ENCODE measurements at regions of chr5 and their contacts with region 1.

Region 1: DNA sequence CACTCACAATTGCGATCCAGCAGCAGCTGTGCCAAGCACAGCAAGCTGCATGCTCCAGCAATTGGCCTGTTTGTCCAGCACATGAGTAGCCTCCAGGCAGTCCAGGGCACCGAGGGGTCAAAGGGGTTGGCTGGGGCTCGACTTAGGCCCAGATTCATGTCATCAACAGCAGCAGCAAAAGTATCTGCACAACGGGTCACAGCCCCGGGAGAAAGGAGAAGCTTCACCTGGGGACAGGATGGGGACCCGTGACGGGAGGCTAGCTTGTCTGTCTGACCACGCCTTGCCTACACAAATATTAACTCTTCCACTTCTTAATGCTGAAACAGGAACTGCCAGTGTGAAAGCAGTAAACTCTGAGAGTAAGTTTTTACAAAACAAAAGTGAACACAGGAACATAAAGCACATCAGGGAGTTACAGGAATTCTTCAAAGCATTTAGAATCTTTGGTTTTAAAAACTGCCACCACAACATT is 191.2 kb downstream of the PIK3R1 start:
- DNase-seq: no peak
- H3K4me3 Mint-ChIP-seq: no peak overlapping the region
- H3K27ac Mint-ChIP-seq: no peak overlapping the region
- H3K4me1 Mint-ChIP-seq: peaks cover 24% of the 10 kb centered on the region
- H3K27me3 Mint-ChIP-seq: no peaks in the 10 kb centered on the region

Region 2: DNA sequence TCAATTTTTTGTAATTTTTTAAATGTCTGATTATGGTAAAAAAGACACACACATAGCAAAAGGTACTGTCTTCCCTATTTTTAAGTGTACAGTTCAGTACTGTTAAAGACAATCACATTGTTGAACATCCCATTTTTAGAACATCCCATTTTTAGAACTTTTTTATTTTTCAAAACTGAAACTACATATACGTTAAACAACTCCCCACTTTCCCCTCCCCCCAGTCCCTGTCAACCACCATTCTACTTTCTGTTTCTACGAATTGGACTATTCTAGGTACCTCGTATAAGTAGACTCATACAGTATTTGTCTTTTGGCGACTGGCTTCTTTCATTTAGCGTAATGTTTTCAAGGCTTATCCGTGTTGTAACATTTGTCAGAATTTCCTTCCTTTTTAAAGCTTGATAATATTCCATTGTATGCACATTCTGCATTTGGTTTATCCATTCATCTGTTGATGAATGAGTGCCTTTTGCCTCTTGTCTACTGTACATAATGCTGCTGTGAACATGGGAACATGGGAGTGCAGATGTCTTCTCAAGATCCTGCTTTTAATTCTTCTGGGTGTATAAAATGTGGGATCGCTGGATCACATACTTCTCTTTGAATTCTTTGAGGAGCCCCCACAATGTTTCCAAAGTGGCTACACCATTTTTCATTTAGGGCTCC is 37.2 kb before region 1 on chr5:
- CTCF ChIA-PET with region 1: no interaction called
- intact Hi-C with region 1: loop called (anchors 1 kb)
- DNase-seq: peak; percentile 73
- H3K4me3 Mint-ChIP-seq: no peak overlapping the region
- H3K27ac Mint-ChIP-seq: peak overlapping the region; percentile 19
- H3K4me1 Mint-ChIP-seq: peaks cover 36% of the 10 kb centered on the region
- H3K27me3 Mint-ChIP-seq: no peaks in the 10 kb centered on the region

Region 3: GRCh38 chr5:68440245-68440644 is 33.4 kb after region 1 on chr5:
- CTCF ChIA-PET with region 1: no interaction called
- intact Hi-C with region 1: no loop called
- DNase-seq: no peak
- H3K4me3 Mint-ChIP-seq: no peak overlapping the region
- H3K27ac Mint-ChIP-seq: no peak overlapping the region
- H3K4me1 Mint-ChIP-seq: peaks cover 21% of the 10 kb centered on the region
- H3K27me3 Mint-ChIP-seq: peaks cover 10% of the 10 kb centered on the region